PC-9 (cell line): ENCODE measurements at regions of chr17 and their contacts with region 1.

Region 1: GRCh38 chr17:56269556-56270389 is 116.5 kb downstream of the ANKFN1 start:
- DNase-seq: no peak
- H3K4me3 ChIP-seq: no peak overlapping the region
- H3K27ac ChIP-seq: no peak overlapping the region
- H3K4me1 ChIP-seq: no peaks in the 10 kb centered on the region
- H3K27me3 ChIP-seq: no peaks in the 10 kb centered on the region
- CTCF ChIP-seq: no peak

Region 2: DNA sequence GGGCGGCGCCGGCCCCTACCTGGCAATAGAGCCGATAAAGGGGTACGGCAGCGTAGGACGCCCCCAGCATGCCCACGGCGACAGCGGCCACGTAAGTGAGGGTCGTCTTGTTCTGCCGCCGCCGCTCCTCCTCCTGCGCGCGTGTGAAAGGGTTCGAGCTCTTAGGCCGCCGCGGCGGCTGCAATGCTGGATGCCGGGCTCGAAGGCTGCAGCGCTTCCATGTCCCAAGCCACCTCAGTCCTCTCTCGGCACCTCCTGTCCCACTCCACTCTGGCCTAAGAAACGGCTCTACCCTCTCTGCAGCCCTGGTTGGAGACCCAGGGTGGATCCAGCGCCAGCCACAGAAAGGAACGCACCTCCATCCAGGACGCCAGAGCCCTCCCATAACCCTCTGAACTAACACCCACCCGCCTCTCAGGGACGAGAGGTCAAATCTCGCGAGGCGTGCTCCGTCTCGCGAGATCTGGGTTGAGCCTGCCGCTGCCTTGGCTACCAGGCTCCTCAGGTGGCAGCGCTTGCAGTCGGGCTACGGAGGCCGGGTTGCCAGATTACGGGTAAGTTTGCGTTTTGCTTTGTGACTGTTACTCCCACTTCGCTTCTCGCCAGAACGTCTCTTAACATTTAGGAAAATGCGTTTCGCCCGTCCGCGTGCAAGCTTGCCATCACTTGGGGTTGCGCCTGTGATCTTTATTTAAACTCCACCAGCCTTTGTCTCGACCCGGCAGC is 1301.3 kb before region 1 on chr17 and contains the starts of genes COX11 and STXBP4:
- CTCF ChIA-PET with region 1: no interaction called
- POLR2A ChIA-PET with region 1: no interaction called
- intact Hi-C with region 1: no loop called
- DNase-seq: peak; percentile 93 to 94
- H3K4me3 ChIP-seq: peak within 1 kb of the TSS; percentile 68
- H3K27ac ChIP-seq: peak within 1 kb of the TSS; percentile 32
- H3K4me1 ChIP-seq: peaks cover 29% of the 10 kb centered on the region
- H3K27me3 ChIP-seq: no peaks in the 10 kb centered on the region
- CTCF ChIP-seq: peak; percentile 64
- total RNA-seq, gene COX11: 54.1 and 58.2 TPM in 2 replicates
- total RNA-seq, gene STXBP4: 6.2 and 12.0 TPM in 2 replicates

Region 3: GRCh38 chr17:56310782-56311181 is 41.0 kb after region 1 on chr17:
- CTCF ChIA-PET with region 1: no interaction called
- POLR2A ChIA-PET with region 1: no interaction called
- intact Hi-C with region 1: loop called (anchors 1 kb)
- DNase-seq: peak in 1 of 2 experiments; percentile 10
- H3K4me3 ChIP-seq: no peak overlapping the region
- H3K27ac ChIP-seq: no peak overlapping the region
- H3K4me1 ChIP-seq: no peaks in the 10 kb centered on the region
- H3K27me3 ChIP-seq: no peaks in the 10 kb centered on the region
- CTCF ChIP-seq: no peak

Region 4: DNA sequence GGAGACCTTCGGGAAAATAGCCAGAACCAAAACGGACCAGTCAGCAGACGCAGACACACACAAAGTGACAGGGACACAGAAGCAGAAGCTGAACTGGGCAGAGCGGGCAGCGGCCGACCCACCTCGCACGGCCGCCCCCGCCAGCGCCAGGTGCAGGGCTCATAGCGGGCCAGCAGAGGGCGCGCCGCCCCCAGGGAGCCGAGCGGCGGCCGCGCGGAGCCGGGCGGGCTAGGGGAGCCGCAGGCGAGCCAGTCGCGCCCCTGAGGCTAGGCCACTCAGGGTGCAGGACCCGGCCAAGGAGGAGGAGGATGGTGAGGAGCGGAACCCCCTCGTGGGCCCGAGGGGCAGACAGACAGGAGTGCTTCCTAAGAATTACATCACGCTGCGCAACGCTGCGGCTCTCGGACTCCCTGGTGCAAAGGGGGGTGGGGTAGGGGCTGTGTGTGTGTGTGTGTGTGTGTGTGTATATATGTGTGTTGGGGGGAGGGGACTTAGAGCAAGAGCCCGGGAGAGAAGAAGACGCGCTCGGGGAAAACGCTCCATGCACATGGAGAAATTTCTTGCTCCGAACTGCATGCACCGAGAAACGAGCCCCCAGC is 322.8 kb after region 1 on chr17:
- CTCF ChIA-PET with region 1: no interaction called
- POLR2A ChIA-PET with region 1: no interaction called
- intact Hi-C with region 1: no loop called
- DNase-seq: peak; percentile 73 to 76
- H3K4me3 ChIP-seq: peak overlapping the region; percentile 97
- H3K27ac ChIP-seq: no peak overlapping the region
- H3K4me1 ChIP-seq: peaks cover 5% of the 10 kb centered on the region
- H3K27me3 ChIP-seq: no peaks in the 10 kb centered on the region
- CTCF ChIP-seq: peak; percentile 81